WTC11 (cell line): ENCODE measurements at regions of chr1 and their contacts with region 1.

Region 1: DNA sequence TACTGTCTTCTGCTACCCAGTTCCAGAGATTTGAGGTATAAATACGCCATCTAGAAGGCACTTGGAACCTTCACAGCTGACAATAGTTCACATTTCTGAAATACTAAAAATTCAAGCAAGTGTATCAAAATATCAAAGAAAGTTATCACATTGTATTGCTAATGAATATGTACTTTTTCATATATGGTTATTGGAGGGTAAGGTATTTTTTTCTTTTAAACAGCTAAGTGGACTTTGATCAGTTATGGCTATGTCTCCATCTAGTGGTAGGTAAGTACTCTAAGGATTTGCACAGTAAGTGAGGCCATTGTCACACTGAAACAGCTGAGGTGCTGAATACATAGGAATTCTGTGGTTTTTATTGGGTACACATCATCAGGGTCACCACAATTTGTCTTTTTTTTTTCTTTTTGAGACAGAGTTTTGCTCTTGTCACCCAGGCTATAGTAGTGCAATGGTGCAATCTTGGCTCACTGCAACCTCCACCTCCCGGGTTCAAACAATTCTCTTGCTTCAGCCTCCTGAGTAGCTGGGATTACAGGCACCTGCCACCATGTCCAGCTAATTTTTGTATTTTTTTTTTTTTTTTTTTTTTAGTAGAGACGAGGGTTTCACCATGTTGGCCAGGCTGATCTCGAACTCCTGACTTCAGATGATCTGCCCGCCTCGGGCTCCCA is 49.1 kb upstream of the CR2 start:
- DNase-seq: no peak
- ATAC-seq: peak; percentile 79
- H3K4me3 Mint-ChIP-seq: no peak overlapping the region
- H3K27ac Mint-ChIP-seq: no peak overlapping the region
- H3K4me1 Mint-ChIP-seq: no peaks in the 10 kb centered on the region
- H3K27me3 Mint-ChIP-seq: no peaks in the 10 kb centered on the region
- CTCF ChIP-seq: peak; percentile 52

Region 2: DNA sequence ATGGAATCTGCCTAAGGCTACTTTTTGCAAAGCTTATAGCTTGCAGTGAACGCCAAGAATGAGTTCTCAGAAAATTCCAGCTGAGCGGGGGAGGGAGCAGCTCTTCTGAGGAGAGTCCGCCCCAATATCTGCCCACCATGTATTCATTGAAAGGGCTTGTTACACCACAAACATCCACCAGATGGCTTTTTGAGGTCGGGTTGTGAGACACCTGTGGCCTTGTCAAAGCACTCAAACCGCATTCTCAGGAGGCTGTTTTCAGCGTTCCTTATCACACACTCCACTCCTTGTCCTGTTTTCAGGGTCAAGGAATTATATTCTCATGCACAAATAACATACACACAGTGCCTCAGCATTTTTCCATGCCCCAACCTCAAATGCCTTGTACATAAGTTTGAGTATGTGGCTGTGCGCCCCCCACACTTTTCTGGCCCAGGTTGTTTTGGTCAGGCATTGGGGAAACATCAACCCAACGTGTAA is 320.2 kb before region 1 on chr1:
- CTCF ChIA-PET with region 1: interaction called, 37 read pairs
- POLR2A ChIA-PET with region 1: no interaction called
- DNase-seq: peak; percentile 52
- ATAC-seq: peak; percentile 95
- H3K4me3 Mint-ChIP-seq: 0 out of 2 replicates have a peak overlapping the region, but pooled peaks have one; percentile 19
- H3K27ac Mint-ChIP-seq: no peak overlapping the region
- H3K4me1 Mint-ChIP-seq: peaks cover 18% of the 10 kb centered on the region
- H3K27me3 Mint-ChIP-seq: no peaks in the 10 kb centered on the region
- CTCF ChIP-seq: peak; percentile 53; the same call in 1 of the 2 replicates

Region 3: GRCh38 chr1:207259391-207259790 is 145.6 kb before region 1 on chr1:
- CTCF ChIA-PET with region 1: interaction called, 25 read pairs
- POLR2A ChIA-PET with region 1: no interaction called
- DNase-seq: no peak
- ATAC-seq: peak; percentile 92
- H3K4me3 Mint-ChIP-seq: no peak overlapping the region
- H3K27ac Mint-ChIP-seq: no peak overlapping the region
- H3K4me1 Mint-ChIP-seq: peaks cover 5% of the 10 kb centered on the region
- H3K27me3 Mint-ChIP-seq: no peaks in the 10 kb centered on the region
- CTCF ChIP-seq: no peak; the same call in 1 of the 2 replicates

Region 4: GRCh38 chr1:207423560-207424292 is 18.7 kb after region 1 on chr1:
- CTCF ChIA-PET with region 1: interaction called, 12 read pairs
- POLR2A ChIA-PET with region 1: no interaction called
- DNase-seq: peak; percentile 29
- ATAC-seq: peak; percentile 81
- H3K4me3 Mint-ChIP-seq: peak overlapping the region; percentile 63
- H3K27ac Mint-ChIP-seq: peak overlapping the region; percentile 34; the same call in 1 of the 2 replicates
- H3K4me1 Mint-ChIP-seq: peaks cover 13% of the 10 kb centered on the region
- H3K27me3 Mint-ChIP-seq: peaks cover 6% of the 10 kb centered on the region
- CTCF ChIP-seq: no peak

Region 5: DNA sequence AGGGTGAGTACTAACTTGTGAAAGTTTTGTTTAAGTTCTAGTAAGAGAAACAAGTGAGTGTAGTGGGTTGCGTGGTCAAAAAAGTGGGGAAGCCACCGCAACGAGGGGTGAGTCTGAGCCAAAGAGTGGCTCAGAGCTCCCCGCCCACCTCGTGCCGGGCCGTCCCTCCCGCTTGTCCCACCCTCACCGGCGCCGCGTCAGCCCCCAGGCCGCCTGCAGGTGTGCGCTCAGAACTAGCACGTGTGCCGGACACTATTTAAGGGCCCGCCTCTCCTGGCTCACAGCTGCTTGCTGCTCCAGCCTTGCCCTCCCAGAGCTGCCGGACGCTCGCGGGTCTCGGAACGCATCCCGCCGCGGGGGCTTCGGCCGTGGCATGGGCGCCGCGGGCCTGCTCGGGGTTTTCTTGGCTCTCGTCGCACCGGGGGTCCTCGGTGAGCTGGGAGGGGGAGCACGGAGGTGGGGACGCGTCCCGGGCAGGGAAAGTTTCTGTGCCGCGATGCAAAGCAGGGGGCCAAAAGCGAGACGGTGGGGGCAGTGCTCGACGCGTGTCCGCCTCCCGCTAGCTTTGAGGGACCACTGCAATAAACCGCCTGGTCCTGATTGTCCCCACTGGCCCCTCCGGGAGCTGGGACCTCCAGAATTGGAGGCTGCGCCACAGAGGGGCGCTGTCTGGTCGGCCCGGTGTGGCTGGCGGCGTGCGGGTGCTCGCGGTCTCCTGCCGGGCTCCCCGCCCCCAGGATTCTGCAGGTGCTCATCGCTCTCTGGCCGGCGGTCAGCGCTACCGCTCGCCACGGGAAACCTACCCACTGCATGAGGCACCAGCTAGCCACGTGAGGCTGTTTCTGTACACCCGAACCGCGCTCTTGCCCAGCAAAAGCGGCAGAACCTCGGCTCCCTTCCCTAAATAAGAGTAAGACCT is 49.3 kb after region 1 on chr1 and contains the start of gene CR2:
- CTCF ChIA-PET with region 1: interaction called, 12 read pairs
- POLR2A ChIA-PET with region 1: no interaction called
- DNase-seq: peak; percentile 80
- ATAC-seq: peak; percentile 98
- H3K4me3 Mint-ChIP-seq: peak within 1 kb of the TSS; percentile 67
- H3K27ac Mint-ChIP-seq: no peak within 1 kb of the TSS
- H3K4me1 Mint-ChIP-seq: peaks cover 4% of the 10 kb centered on the region
- H3K27me3 Mint-ChIP-seq: peaks cover 27% of the 10 kb centered on the region
- CTCF ChIP-seq: no peak
- total RNA-seq, gene CR2: 3.8 to 7.6 TPM (median 6.5 TPM) in 3 replicates

Region 6: DNA sequence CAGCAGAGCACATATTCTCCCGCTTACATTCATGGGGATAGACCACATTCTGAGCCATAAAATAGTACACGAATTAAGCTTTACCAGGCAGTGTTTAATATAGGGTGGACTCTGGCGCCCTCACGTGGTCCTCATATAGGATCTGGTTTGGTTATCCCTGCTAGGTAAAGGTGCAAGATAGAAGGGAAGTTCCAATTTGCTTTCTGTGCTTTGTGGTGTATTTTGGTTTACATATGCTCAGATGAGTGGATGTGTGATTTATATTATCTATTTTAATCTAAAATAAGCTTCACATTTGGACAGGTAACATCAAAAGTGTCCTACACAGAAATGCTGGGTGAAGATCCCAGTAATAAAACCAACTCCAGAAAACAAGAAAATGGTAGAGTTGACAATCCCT is 94.6 kb after region 1 on chr1:
- CTCF ChIA-PET with region 1: interaction called, 11 read pairs
- POLR2A ChIA-PET with region 1: no interaction called
- DNase-seq: peak; percentile 64
- ATAC-seq: peak; percentile 69
- H3K4me3 Mint-ChIP-seq: no peak overlapping the region
- H3K27ac Mint-ChIP-seq: no peak overlapping the region
- H3K4me1 Mint-ChIP-seq: peaks cover 11% of the 10 kb centered on the region
- H3K27me3 Mint-ChIP-seq: peaks cover 29% of the 10 kb centered on the region
- CTCF ChIP-seq: peak; percentile 60